Dendritic cell treated with granulocyte-macrophage colony-stimulating factor and Interleukin-4, amounts not matched to agents 40 ng/mL and 50 ng/mL, for 4 days (primary cell): ENCODE measurements at regions of chr21 and their contacts with region 1.

Region 1: GRCh38 chr21:31443736-31444521 is 99.9 kb upstream of the TIAM1 start:
- H3K4me3 Mint-ChIP-seq: no peak overlapping the region
- H3K27ac Mint-ChIP-seq: peak overlapping the region; percentile 87
- H3K4me1 Mint-ChIP-seq: peaks cover 67% of the 10 kb centered on the region
- H3K27me3 Mint-ChIP-seq: no peaks in the 10 kb centered on the region

Region 2: GRCh38 chr21:31354604-31355443 is 89.1 kb before region 1 on chr21:
- intact Hi-C with region 1: loop called (anchors 5 kb)
- H3K4me3 Mint-ChIP-seq: no peak overlapping the region
- H3K27ac Mint-ChIP-seq: no peak overlapping the region
- H3K4me1 Mint-ChIP-seq: peaks cover 8% of the 10 kb centered on the region
- H3K27me3 Mint-ChIP-seq: peaks cover 11% of the 10 kb centered on the region

Region 3: DNA sequence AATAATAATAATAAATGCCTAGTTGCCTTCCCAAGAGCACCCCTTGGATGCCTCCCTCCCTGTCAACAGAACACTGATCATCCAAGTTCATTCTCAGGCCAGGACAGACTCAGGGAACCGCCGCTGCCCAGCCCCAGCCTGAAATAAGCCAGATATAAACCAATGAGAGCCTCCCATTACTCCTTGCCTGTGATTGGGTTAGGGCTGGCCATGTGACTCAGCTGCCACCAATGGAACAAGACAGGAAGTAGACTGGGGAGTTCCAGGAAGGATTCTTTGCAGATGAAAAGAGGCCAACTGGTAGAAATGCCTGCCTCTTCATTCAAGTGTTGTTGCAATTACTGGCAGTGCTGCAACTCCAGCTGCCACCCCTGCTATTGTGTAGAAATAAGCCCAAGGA is 46.5 kb after region 1 on chr21:
- intact Hi-C with region 1: no loop called
- H3K4me3 Mint-ChIP-seq: no peak overlapping the region
- H3K27ac Mint-ChIP-seq: no peak overlapping the region
- H3K4me1 Mint-ChIP-seq: no peaks in the 10 kb centered on the region
- H3K27me3 Mint-ChIP-seq: peaks cover 4% of the 10 kb centered on the region